ENCODE measurements at regions of chr10 and their contacts with region 1.

Region 1: GRCh38 chr10:132452631-132453469 is 55.9 kb downstream of the PWWP2B start:
- DNase-seq: peak; percentile 85
- H3K4me3 Mint-ChIP-seq: no peak overlapping the region
- H3K27ac Mint-ChIP-seq: peak overlapping the region; percentile 58
- H3K4me1 Mint-ChIP-seq: peaks cover 4% of the 10 kb centered on the region
- H3K27me3 Mint-ChIP-seq: no peaks in the 10 kb centered on the region

Region 2: DNA sequence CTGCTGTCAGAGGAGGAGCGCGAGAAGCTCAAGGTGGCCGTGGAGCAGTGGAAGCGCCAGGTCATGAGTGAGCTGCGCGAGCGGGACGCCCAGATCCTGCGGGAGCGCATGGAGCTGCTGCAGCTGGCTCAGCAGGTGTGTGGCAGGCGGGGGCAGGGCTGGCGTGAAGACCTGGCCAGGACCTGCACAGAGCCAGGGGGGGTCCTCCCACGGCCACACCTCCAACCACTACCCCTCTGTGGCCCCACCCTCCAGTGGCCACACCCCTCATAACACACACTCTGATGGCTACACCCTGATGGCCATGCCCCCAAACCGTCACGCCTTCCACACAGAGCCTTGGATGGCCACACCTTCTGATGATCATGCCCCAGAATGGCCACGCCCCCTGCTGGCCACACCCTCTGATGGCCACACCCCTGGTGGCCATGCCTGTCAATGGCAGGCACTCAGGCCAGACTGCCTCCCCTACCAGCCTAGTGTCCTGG is 289.5 kb before region 1 on chr10:
- intact Hi-C with region 1: loop called (anchors 2 kb)
- DNase-seq: peak; percentile 56
- H3K4me3 Mint-ChIP-seq: no peak overlapping the region
- H3K27ac Mint-ChIP-seq: peak overlapping the region; percentile 74
- H3K4me1 Mint-ChIP-seq: peaks cover 41% of the 10 kb centered on the region
- H3K27me3 Mint-ChIP-seq: no peaks in the 10 kb centered on the region

Region 3: GRCh38 chr10:132223156-132223590 is 229.7 kb before region 1 on chr10:
- intact Hi-C with region 1: loop called (anchors 1 kb)
- DNase-seq: peak; percentile 64
- H3K4me3 Mint-ChIP-seq: no peak overlapping the region
- H3K27ac Mint-ChIP-seq: no peak overlapping the region
- H3K4me1 Mint-ChIP-seq: no peaks in the 10 kb centered on the region
- H3K27me3 Mint-ChIP-seq: no peaks in the 10 kb centered on the region

Region 4: DNA sequence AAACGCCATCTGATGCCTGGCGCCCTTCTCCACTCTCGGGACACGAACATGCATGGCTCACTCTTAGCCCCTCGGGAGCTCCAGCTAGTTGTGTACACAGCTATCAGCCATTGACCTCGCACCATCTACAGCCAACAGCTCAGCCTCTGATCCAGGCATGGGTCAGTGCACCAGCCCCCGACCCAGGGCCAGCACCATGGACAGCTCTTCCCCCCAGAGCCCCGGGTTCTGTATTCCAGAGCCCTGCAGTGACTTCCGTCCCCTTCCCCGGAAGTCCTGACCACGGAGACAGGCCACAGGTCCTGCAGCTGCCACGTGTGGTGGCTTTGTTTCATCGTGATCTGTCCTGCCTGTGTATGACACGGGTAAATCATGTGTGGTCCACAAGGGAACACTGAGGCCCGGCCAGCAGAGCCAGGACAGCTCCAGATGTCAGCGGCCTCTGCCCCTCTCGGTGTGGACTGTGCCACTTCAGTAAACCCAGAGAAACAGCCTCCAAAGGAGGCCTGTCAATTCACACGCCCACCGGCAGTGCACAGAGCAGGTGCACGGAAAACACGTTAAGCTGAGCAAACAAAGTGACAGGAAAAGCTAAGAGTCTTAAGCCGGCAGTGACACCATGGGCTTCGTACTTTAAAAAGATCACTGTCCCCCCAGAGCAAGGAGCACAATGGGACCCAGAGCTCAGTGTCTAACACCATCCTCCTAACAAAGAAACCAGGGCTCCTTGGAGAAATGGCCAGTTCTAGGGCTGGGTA is 158.1 kb before region 1 on chr10:
- intact Hi-C with region 1: no loop called
- DNase-seq: no peak
- H3K4me3 Mint-ChIP-seq: no peak overlapping the region
- H3K27ac Mint-ChIP-seq: no peak overlapping the region
- H3K4me1 Mint-ChIP-seq: no peaks in the 10 kb centered on the region
- H3K27me3 Mint-ChIP-seq: no peaks in the 10 kb centered on the region

Region 5: DNA sequence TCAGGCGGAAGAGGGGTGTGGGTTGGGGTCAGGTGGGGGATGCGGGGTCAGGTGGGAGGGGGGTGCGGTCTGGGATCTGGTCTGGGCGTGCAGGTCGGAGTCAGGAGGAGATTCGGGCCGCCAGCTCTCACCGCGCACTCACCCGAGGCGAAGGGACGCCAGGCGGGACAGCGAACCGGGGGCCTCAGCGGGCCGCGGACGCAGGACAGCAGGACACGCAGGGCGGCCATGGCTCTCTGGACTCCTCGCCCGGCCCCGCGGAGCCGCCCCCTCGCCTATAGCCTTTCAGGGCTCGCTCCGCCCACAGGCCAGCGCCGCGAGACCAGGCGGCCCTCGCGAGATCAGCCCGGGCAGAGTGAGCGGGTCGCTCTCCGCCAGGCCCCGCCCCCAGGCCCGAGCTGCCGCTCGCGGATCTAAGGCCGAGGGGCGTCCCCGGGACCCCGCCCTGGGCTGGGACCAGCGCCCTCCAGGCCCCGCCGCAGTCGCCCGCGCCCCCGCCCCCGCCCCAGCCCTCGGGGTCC is 920.3 kb after region 1 on chr10 and contains the start of gene ECHS1:
- intact Hi-C with region 1: loop called (anchors 10 kb)
- DNase-seq: peak; percentile 95
- H3K4me3 Mint-ChIP-seq: peak within 1 kb of the TSS; percentile 91
- H3K27ac Mint-ChIP-seq: peak within 1 kb of the TSS; percentile 84
- H3K4me1 Mint-ChIP-seq: peaks cover 5% of the 10 kb centered on the region
- H3K27me3 Mint-ChIP-seq: peaks cover 16% of the 10 kb centered on the region
- total RNA-seq, gene ECHS1: 69.3 and 69.6 TPM in 2 replicates

Measured in activated T-helper 1 cell treated with anti-CD3 and anti-CD28 coated beads, Interleukin-12 subunit alpha, Interleukin-12 subunit beta, Interleukin-2, Interleukin-4 antibody, amounts not matched to agents 30 ng/mL and 10 ng/mL and 1 ng/mL, durations not matched to agents 14 hours and 24 hours and 36 hours (primary cell).